Naive thymus-derived CD4-positive, alpha-beta T cell (primary cell): ENCODE measurements at regions of chr22 and their contacts with region 1.

Region 1: GRCh38 chr22:36065775-36066559 is 37.3 kb upstream of the RBFOX2 start:
- DNase-seq: peak; percentile 35 to 80 (median 56)
- ATAC-seq: peak; percentile 88
- H3K4me3 ChIP-seq: peak overlapping the region; percentile 72
- H3K4me3 Mint-ChIP-seq: peak overlapping the region; percentile 80 to 92 (median 87)
- H3K27ac ChIP-seq: peak overlapping the region; percentile 21
- H3K27ac Mint-ChIP-seq: peak overlapping the region in 7 of 9 donors; percentile 14 to 89 (median 58)
- H3K4me1 ChIP-seq: peaks cover 6 to 8% of the 10 kb centered on the region in 2 donors
- H3K4me1 Mint-ChIP-seq: peaks cover 4 to 10% (median 8%) of the 10 kb centered on the region in 7 donors
- H3K27me3 ChIP-seq: no peaks in the 10 kb centered on the region
- H3K27me3 Mint-ChIP-seq: peaks cover 0 to 11% (median 0%) of the 10 kb centered on the region in 5 donors

Region 2: DNA sequence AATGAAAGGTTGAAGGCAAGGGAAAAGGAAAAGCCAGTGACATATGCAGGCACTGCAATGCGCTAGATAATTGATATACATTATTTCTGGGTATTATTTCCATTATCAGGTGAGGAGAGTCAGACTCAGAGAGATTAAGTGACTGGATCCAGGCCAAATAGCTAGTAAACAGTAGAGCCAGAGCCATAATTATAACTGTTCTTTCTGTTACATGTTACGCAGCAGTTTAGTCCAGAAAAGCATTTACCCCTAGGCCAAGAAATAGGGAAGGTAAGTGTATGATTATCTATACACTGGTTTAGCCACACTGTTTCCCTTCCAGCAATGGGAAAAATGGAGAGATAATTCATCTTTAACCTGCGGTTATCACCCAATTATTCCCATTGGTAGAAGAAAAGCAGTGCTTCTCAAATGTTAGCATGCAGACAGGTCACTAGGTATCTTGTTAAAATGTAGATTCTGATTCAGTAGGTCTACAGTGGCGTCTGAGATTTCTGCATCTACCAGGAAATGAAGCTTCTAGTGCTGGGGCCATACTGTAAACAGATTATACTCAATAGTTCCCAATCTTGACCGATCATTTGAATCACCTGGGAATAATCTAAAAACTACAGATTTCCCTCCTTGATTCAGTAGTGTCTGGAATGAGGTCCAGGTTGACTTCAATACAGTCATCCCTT is 106.7 kb before region 1 on chr22:
- CTCF ChIA-PET with region 1: no interaction called
- POLR2A ChIA-PET with region 1: no interaction called
- intact Hi-C with region 1: no loop called
- DNase-seq: no peak
- ATAC-seq: no peak
- H3K4me3 ChIP-seq: no peak overlapping the region
- H3K4me3 Mint-ChIP-seq: no peak overlapping the region
- H3K27ac ChIP-seq: no peak overlapping the region
- H3K27ac Mint-ChIP-seq: no peak overlapping the region
- H3K4me1 ChIP-seq: no peaks in the 10 kb centered on the region
- H3K4me1 Mint-ChIP-seq: no peaks in the 10 kb centered on the region
- H3K27me3 ChIP-seq: no peaks in the 10 kb centered on the region
- H3K27me3 Mint-ChIP-seq: peaks cover 0 to 18% (median 8%) of the 10 kb centered on the region in 5 donors

Region 3: DNA sequence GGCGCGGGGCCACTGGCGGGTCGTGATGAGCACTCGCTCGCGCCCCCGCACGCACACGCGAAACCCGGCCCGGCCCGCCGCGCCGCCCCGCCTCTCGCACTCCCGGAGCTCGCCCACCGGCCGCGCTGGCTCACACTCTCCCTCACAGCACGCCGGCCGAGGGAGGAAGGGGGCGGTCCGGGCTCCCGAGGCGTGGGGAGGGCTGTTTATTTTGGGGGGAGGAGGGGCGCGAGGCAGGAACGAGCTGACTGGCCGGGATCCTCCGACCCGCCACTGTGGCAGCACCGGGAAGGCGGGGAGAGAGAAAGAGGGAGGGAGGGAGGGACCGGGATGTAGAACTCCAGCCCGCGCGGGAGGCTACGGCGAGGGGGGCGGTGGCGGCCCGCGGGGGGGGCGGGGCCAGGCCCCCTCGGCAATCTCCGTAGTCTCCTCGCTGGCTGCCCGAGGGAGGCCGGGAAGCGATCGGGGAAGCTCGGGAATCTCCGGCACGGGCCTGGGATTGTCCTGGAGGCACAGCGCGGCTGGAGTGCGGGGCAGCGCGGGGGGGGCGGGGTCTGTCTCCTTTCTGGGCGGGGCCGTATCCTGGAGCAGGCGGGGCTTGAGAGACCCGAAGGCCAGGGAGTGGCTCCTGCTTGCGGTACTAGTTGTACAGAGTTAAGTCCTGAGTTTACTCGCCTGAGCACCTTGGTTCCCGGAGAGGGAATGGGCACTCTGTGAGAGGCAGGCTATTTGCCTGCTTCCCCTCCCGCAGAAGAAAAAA is 37.1 kb before region 1 on chr22 and contains the start of gene RBFOX2:
- CTCF ChIA-PET with region 1: interaction called, 9 read pairs
- POLR2A ChIA-PET with region 1: no interaction called
- intact Hi-C with region 1: loop called (anchors 1 kb)
- DNase-seq: peak; percentile 26 to 82 (median 44)
- ATAC-seq: peak; percentile 80
- H3K4me3 ChIP-seq: peak within 1 kb of the TSS; percentile 61
- H3K4me3 Mint-ChIP-seq: peak within 1 kb of the TSS; percentile 85 to 96 (median 90)
- H3K27ac ChIP-seq: peak within 1 kb of the TSS; percentile 51
- H3K27ac Mint-ChIP-seq: peak within 1 kb of the TSS in 8 of 9 donors; percentile 40 to 86 (median 75)
- H3K4me1 ChIP-seq: peaks cover 8 to 13% of the 10 kb centered on the region in 2 donors
- H3K4me1 Mint-ChIP-seq: peaks cover 15 to 25% (median 23%) of the 10 kb centered on the region in 7 donors
- H3K27me3 ChIP-seq: no peaks in the 10 kb centered on the region
- H3K27me3 Mint-ChIP-seq: peaks cover 0 to 54% (median 4%) of the 10 kb centered on the region in 5 donors
- total RNA-seq, gene RBFOX2: 0.45 to 1.7 (median 1.2) TPM

Region 4: GRCh38 chr22:36221799-36222751 is 156.1 kb after region 1 on chr22:
- CTCF ChIA-PET with region 1: no interaction called
- POLR2A ChIA-PET with region 1: no interaction called
- intact Hi-C with region 1: loop called in 1 of 2 experiments (anchors 1 kb)
- DNase-seq: peak in 8 of 9 donors; percentile 12 to 41 (median 26)
- ATAC-seq: peak; percentile 93
- H3K4me3 ChIP-seq: no peak overlapping the region
- H3K4me3 Mint-ChIP-seq: peak overlapping the region in 8 of 10 donors; percentile 22 to 73 (median 60)
- H3K27ac ChIP-seq: no peak overlapping the region
- H3K27ac Mint-ChIP-seq: peak overlapping the region in 4 of 9 donors; percentile 28 to 57 (median 46)
- H3K4me1 ChIP-seq: no peaks in the 10 kb centered on the region
- H3K4me1 Mint-ChIP-seq: peaks cover 8 to 16% (median 13%) of the 10 kb centered on the region in 7 donors
- H3K27me3 ChIP-seq: no peaks in the 10 kb centered on the region
- H3K27me3 Mint-ChIP-seq: peaks cover 0 to 29% (median 3%) of the 10 kb centered on the region in 5 donors